ENCODE measurements at regions of chr19 and their contacts with region 1.

Region 1: GRCh38 chr19:16041299-16041990 is 34.9 kb upstream of the TPM4 start:
- DNase-seq: peak; percentile 81
- ATAC-seq: peak; percentile 80
- H3K4me3 Mint-ChIP-seq: peak overlapping the region; percentile 38
- H3K27ac Mint-ChIP-seq: peak overlapping the region; percentile 39
- H3K4me1 Mint-ChIP-seq: peaks cover 17% of the 10 kb centered on the region
- H3K27me3 Mint-ChIP-seq: peaks cover 14% of the 10 kb centered on the region

Region 2: GRCh38 chr19:15672580-15673175 is 368.8 kb before region 1 on chr19 and contains the start of gene CYP4F12:
- CTCF ChIA-PET with region 1: no interaction called
- POLR2A ChIA-PET with region 1: no interaction called
- DNase-seq: no peak
- ATAC-seq: peak; percentile 53
- H3K4me3 Mint-ChIP-seq: no peak within 1 kb of the TSS
- H3K27ac Mint-ChIP-seq: no peak within 1 kb of the TSS
- H3K4me1 Mint-ChIP-seq: no peaks in the 10 kb centered on the region
- H3K27me3 Mint-ChIP-seq: no peaks in the 10 kb centered on the region
- total RNA-seq, gene CYP4F12: not detected

Region 3: GRCh38 chr19:16018801-16019551 is 22.5 kb before region 1 on chr19:
- CTCF ChIA-PET with region 1: no interaction called
- POLR2A ChIA-PET with region 1: no interaction called
- DNase-seq: no peak
- ATAC-seq: no peak
- H3K4me3 Mint-ChIP-seq: no peak overlapping the region
- H3K27ac Mint-ChIP-seq: no peak overlapping the region
- H3K4me1 Mint-ChIP-seq: no peaks in the 10 kb centered on the region
- H3K27me3 Mint-ChIP-seq: no peaks in the 10 kb centered on the region

Region 4: DNA sequence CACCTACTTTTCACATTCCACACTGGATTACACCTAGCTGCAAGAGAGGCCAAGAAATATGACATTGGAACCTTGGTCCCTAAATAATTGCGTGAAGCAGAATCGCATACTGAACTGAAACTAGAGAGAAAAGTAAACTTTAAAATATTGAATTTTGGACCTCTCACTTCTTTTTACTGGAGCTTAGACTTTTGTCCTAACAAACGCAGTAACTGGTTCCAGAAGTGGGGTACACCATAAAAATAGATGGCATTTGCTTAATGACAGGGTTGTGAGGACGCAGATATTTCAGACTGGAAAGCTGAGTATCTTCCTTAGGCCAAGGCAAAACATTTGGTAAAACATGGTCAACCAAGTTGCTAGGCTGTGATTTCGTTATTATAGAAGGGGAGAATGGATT is 15.6 kb after region 1 on chr19:
- CTCF ChIA-PET with region 1: interaction called, 44 read pairs
- POLR2A ChIA-PET with region 1: no interaction called
- DNase-seq: no peak
- ATAC-seq: no peak
- H3K4me3 Mint-ChIP-seq: no peak overlapping the region
- H3K27ac Mint-ChIP-seq: no peak overlapping the region
- H3K4me1 Mint-ChIP-seq: peaks cover 9% of the 10 kb centered on the region
- H3K27me3 Mint-ChIP-seq: peaks cover 20% of the 10 kb centered on the region

Region 5: DNA sequence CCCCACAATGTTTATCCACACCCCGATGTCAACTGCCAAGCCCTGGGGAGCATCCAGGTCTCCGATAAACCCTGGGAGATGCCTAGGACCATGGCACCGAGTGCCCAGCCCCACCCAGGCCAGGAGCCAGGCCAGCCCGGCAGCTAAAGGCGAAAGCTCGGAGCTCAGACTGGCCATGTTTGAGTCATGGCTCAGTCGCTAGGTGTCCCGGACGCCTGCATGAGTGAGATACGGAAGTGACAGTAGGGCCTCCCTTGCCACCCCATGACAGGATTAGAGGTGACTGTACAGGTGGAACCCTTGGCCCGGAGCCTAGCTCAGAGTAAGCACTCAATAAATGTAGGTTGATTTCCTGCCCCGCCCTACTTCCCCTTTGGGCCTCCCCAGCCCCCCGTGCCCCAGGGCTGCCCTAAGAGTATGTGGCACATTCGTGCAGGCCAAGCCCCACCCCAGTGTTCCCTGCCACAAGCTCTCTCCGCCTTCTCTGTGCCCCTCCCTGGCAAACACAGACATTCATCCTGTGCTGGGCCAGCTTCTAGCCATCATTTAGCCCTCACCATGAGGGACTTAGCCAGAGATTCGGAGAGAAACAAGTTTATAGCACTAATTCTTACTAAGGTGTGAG is 29.0 kb after region 1 on chr19:
- CTCF ChIA-PET with region 1: interaction called, 11 read pairs
- POLR2A ChIA-PET with region 1: no interaction called
- DNase-seq: peak; percentile 92
- ATAC-seq: peak; percentile 95
- H3K4me3 Mint-ChIP-seq: no peak overlapping the region
- H3K27ac Mint-ChIP-seq: no peak overlapping the region
- H3K4me1 Mint-ChIP-seq: peaks cover 51% of the 10 kb centered on the region
- H3K27me3 Mint-ChIP-seq: no peaks in the 10 kb centered on the region

Region 6: DNA sequence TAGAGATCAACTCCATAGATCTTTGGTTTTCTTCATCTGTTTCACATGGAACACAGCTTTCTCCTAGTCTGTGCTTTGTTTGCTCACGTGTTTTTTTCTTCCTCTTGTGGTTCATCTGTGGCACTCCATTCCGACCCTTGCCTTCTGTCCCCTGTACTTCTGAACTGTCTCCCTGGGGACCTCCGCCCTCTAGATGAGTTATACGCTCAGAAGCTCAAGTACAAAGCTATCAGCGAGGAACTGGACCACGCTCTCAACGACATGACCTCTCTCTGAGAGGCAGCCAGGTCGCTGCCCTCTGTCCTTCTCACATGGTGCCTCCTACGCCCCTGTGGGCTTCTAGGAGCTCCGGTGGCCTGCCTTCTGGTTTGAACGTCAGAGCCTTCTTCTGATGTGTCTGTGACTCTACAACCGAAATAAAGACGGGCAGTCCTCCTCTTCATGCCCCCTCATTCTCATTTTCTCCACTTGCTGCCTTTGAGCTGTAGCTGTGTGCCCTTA is 53.7 kb after region 1 on chr19:
- CTCF ChIA-PET with region 1: interaction called, 14 read pairs
- POLR2A ChIA-PET with region 1: no interaction called
- DNase-seq: no peak
- ATAC-seq: peak; percentile 65
- H3K4me3 Mint-ChIP-seq: no peak overlapping the region
- H3K27ac Mint-ChIP-seq: peak overlapping the region; percentile 67
- H3K4me1 Mint-ChIP-seq: peaks cover 49% of the 10 kb centered on the region
- H3K27me3 Mint-ChIP-seq: no peaks in the 10 kb centered on the region

Region 7: GRCh38 chr19:16143399-16144245 is 102.2 kb after region 1 on chr19 and contains the start of gene HSH2D:
- CTCF ChIA-PET with region 1: interaction called, 12 read pairs
- POLR2A ChIA-PET with region 1: interaction called, 4 read pairs
- DNase-seq: peak; percentile 94
- ATAC-seq: peak; percentile 95
- H3K4me3 Mint-ChIP-seq: peak within 1 kb of the TSS; percentile 96
- H3K27ac Mint-ChIP-seq: peak within 1 kb of the TSS; percentile 99
- H3K4me1 Mint-ChIP-seq: peaks cover 65% of the 10 kb centered on the region
- H3K27me3 Mint-ChIP-seq: no peaks in the 10 kb centered on the region
- total RNA-seq, gene HSH2D: 83.6 to 84.3 TPM

Region 8: DNA sequence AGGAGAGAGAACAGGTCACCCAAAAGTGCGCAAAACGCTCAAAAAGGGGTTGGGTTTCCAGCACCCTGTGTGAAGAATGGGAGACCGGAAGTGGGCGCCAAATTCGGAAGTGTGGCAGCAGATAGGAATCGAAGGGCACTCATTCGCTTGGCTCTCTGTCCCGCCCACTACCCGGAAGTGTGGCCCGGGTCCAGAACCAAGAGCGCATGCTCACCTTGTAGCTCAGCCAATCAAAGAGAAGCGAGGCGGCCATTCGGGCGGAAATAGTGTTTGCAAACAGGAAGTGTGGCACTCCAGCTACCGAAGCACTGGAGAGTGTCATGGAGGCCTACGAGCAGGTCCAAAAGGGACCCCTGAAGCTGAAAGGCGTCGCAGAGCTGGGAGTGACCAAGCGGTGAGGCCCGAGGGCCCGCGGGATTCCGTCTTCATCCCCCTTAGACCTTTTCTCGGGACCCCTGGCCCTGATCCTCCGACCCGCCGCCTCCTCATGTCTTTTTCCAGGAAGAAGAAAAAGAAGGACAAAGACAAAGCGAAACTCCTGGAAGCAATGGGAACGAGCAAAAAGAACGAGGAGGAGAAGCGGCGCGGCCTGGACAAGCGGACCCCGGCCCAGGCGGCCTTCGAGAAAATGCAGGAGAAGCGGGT is 143.8 kb after region 1 on chr19 and contains the start of gene FAM32A:
- CTCF ChIA-PET with region 1: interaction called, 49 read pairs
- POLR2A ChIA-PET with region 1: interaction called, 6 read pairs
- DNase-seq: peak; percentile 100
- ATAC-seq: peak; percentile 95
- H3K4me3 Mint-ChIP-seq: peak within 1 kb of the TSS; percentile 98
- H3K27ac Mint-ChIP-seq: peak within 1 kb of the TSS; percentile 97
- H3K4me1 Mint-ChIP-seq: peaks cover 39% of the 10 kb centered on the region
- H3K27me3 Mint-ChIP-seq: peaks cover 6% of the 10 kb centered on the region
- total RNA-seq, gene FAM32A: 65.8 to 69.4 TPM

Measured in activated CD8-positive, alpha-beta T cell treated with anti-CD3 and anti-CD28 coated beads, Interleukin-2, amount 10 ng/mL, durations not matched to agents 7 days and 5 days (primary cell).